Sigmoid colon (tissue), 7 donors: ENCODE measurements at regions of chr1 and their contacts with region 1.

Region 1: GRCh38 chr1:101309334-101310311 is 72.8 kb downstream of the S1PR1 start:
- DNase-seq: peak; percentile 73
- H3K4me3 ChIP-seq: peak overlapping the region in 3 of 4 donors; percentile 16 to 45 (median 45)
- H3K27ac ChIP-seq: no peak overlapping the region
- H3K4me1 ChIP-seq: peaks cover 0 to 8% (median 5%) of the 10 kb centered on the region in 4 donors
- H3K27me3 ChIP-seq: peaks cover 0 to 13% (median 0%) of the 10 kb centered on the region in 3 donors
- CTCF ChIP-seq: peak; percentile 18 to 82 (median 58)
- EP300 ChIP-seq: no peak
- POLR2A ChIP-seq: no peak

Region 2: GRCh38 chr1:101257500-101258325 is 51.9 kb before region 1 on chr1:
- intact Hi-C with region 1: no loop called
- DNase-seq: no peak
- H3K4me3 ChIP-seq: no peak overlapping the region
- H3K27ac ChIP-seq: no peak overlapping the region
- H3K4me1 ChIP-seq: peaks cover 0 to 6% (median 3%) of the 10 kb centered on the region in 4 donors
- H3K27me3 ChIP-seq: no peaks in the 10 kb centered on the region
- CTCF ChIP-seq: no peak
- EP300 ChIP-seq: no peak
- POLR2A ChIP-seq: no peak

Region 3: GRCh38 chr1:101357444-101357986 is 47.9 kb after region 1 on chr1:
- intact Hi-C with region 1: loop called (anchors 2 kb)
- DNase-seq: no peak
- H3K4me3 ChIP-seq: no peak overlapping the region
- H3K27ac ChIP-seq: no peak overlapping the region
- H3K4me1 ChIP-seq: no peaks in the 10 kb centered on the region
- H3K27me3 ChIP-seq: no peaks in the 10 kb centered on the region
- CTCF ChIP-seq: peak in 3 of 4 experiments; percentile 50 to 76 (median 59)
- EP300 ChIP-seq: no peak
- POLR2A ChIP-seq: no peak